ENCODE measurements at regions of chr5 and their contacts with region 1.

Region 1: DNA sequence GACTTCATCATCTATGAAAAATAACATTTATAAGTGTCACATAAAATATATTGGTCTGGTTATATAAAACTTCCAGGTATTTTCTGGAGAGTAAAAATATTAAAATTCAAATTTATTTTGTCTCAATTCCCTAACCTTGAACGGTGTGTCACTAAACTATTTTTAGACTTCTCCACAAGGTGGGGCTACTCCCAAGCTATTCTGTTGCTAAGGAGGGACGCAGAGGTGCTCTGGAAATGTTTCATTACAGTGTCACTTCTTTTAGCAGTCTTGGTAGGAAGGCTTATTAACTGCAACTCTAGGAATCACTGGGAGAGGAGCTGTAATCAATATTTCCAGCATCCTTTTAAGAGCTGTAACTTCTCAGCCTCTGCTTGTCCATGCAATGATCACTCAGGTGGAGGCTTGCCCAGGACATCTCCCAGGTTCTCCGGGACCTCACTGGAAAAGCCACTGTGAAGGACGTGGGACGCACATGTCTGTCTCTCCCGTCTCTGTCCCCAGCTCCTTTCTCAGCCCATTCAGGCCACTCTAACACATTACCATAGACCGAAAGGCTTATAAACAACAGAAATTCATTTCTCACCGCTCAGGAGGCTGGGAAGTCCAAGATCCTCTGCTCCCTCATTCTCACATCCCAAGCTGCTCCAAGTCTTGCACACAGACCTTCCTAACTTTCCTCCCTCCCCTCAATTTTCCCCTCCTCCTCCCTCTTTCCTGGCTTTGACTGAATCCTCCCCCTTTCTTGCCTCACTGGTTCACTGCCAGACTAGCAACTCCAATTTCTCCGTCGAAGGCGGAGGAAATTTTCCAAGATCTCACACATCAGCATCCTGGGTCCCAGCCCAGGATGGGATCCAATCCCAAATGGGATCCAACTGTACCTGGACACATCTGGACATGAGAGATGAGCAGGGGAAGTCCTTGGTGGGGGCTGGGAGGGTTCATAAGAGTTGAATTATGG is 32.7 kb upstream of the DNAH5 start:
- DNase-seq: peak; percentile 62 to 67
- H3K4me3 ChIP-seq: no peak overlapping the region
- H3K27ac ChIP-seq: no peak overlapping the region
- H3K4me1 ChIP-seq: no peaks in the 10 kb centered on the region
- H3K27me3 ChIP-seq: no peaks in the 10 kb centered on the region
- CTCF ChIP-seq: peak; percentile 85

Region 2: GRCh38 chr5:14038341-14038959 is 61.3 kb after region 1 on chr5:
- CTCF ChIA-PET with region 1: no interaction called
- POLR2A ChIA-PET with region 1: no interaction called
- intact Hi-C with region 1: no loop called
- DNase-seq: peak; percentile 86 to 98
- H3K4me3 ChIP-seq: peak overlapping the region; percentile 31; the same call in 1 of the 2 replicates
- H3K27ac ChIP-seq: peak overlapping the region; percentile 98
- H3K4me1 ChIP-seq: peaks cover 74% of the 10 kb centered on the region
- H3K27me3 ChIP-seq: no peaks in the 10 kb centered on the region
- CTCF ChIP-seq: no peak

Region 3: GRCh38 chr5:14270209-14270702 is 293.1 kb after region 1 on chr5:
- CTCF ChIA-PET with region 1: interaction called, 3 read pairs
- POLR2A ChIA-PET with region 1: no interaction called
- intact Hi-C with region 1: loop called (anchors 1 kb)
- DNase-seq: peak; percentile 81 to 86
- H3K4me3 ChIP-seq: 0 out of 2 replicates have a peak overlapping the region, but pooled peaks have one; percentile 8
- H3K27ac ChIP-seq: peak overlapping the region; percentile 88
- H3K4me1 ChIP-seq: peaks cover 57% of the 10 kb centered on the region
- H3K27me3 ChIP-seq: no peaks in the 10 kb centered on the region
- CTCF ChIP-seq: peak; percentile 90

Region 4: DNA sequence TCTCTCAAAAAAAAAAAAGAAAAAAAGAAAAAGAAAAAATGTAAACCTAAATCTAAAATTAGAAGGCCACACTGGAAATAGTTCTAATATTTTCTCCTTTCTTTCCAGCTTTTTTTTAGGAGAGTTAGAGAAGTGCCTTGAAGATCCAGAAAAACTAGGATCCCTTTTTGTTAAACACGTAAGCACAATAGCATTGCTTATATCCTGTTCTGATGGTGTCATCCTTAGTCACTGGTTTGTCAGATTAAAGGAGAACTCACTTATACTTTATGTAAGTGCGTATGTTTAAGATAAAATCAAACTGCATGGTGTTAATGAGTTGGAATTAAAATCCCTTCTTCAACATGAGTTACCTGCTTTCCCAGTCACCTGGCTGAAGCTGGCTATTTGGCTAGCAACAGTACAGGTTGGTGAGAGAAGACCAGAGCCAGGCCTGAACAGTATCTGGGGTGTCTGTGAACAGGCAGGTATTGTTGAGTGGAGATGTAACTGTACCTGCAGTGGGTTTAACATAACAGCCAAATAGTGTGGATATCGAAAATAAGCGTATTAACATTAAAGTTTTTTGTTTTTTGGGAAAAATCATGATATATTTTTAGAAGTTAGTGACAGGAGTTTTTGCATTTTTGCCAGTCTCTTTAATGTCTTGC is 499.8 kb after region 1 on chr5:
- CTCF ChIA-PET with region 1: no interaction called
- POLR2A ChIA-PET with region 1: interaction called, 5 read pairs
- intact Hi-C with region 1: loop called (anchors 10 kb)
- DNase-seq: peak; percentile 22 to 42
- H3K4me3 ChIP-seq: no peak overlapping the region
- H3K27ac ChIP-seq: peak overlapping the region; percentile 30; the same call in 1 of the 2 replicates
- H3K4me1 ChIP-seq: peaks cover 12% of the 10 kb centered on the region; the same call in 1 of the 2 replicates
- H3K27me3 ChIP-seq: no peaks in the 10 kb centered on the region
- CTCF ChIP-seq: no peak

Region 5: DNA sequence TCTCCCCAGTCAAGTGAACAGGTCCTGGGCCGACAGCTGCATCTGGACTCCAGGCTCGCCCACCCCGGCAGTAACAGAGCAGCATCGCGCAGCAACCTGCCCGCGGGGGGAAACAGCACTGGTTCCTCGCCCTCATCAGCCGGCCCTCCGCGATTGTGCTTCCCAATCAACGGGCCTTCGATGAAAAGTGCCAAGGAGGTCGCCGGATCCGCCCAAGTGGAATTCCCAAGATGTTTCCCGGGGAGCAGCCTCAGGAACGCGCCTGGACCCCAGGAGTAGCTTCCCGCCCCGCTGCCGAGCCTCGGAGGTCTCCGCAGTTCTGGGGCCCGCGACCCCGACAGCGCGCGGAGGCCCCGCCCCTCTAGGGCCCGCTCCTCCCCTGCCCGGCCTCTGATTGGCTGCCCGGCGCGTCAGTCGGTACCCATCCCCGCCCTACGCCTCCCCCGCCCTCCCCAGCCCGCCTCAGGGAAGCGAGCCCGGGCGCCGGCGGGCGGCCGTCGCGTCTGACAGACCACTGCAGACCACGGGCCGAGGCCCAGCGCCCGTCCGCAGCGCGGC is 604.3 kb after region 1 on chr5 and contains the start of gene OTULINL:
- CTCF ChIA-PET with region 1: no interaction called
- POLR2A ChIA-PET with region 1: no interaction called
- intact Hi-C with region 1: loop called (anchors 5 kb)
- DNase-seq: peak; percentile 48 to 93
- H3K4me3 ChIP-seq: peak within 1 kb of the TSS; percentile 75
- H3K27ac ChIP-seq: no peak within 1 kb of the TSS
- H3K4me1 ChIP-seq: 0 out of 2 replicates have a peak, but pooled peaks cover 6% of the 10 kb centered on the region
- H3K27me3 ChIP-seq: peaks cover 36% of the 10 kb centered on the region
- CTCF ChIP-seq: no peak
- total RNA-seq, gene OTULINL: 4.1 and 7.1 TPM in 2 replicates

Region 6: GRCh38 chr5:15013654-15014463 is 1036.7 kb after region 1 on chr5:
- CTCF ChIA-PET with region 1: no interaction called
- POLR2A ChIA-PET with region 1: no interaction called
- intact Hi-C with region 1: loop called (anchors 2 kb)
- DNase-seq: peak in 1 of 2 experiments; percentile 30
- H3K4me3 ChIP-seq: no peak overlapping the region
- H3K27ac ChIP-seq: no peak overlapping the region
- H3K4me1 ChIP-seq: peaks cover 14% of the 10 kb centered on the region
- H3K27me3 ChIP-seq: no peaks in the 10 kb centered on the region
- CTCF ChIP-seq: peak; percentile 84